CD14-positive monocyte (primary cell): ENCODE measurements at regions of chr19 and their contacts with region 1.

Region 1: DNA sequence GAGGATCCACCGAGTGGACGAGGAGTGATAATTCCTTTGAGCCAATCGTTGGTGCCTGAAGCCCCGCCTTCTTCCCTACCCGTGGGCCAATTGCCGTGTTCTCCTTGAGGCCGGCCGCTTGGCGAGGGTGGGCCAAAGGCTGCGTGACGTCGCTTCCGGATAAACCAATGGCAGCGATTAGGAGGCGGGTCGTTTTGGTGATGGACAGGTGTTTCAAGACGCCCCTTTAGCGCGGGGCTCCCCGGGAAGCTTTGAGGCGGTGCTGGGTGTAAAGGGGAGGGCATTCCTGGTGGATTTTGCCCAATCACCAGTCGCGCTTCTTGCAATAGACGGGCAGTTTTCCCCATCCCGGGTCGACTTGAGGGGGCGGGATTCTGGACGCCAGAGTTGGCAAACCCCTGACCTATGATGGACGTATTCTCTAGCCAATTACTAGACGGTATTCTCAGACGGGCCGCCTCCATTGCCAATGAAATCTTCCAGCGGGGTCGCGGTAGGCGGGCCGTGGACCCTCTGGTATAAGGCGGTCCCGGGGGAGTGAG is 310 bp upstream of the PRMT1 start:
- DNase-seq: peak; percentile 99 to 100 (median 100)
- H3K4me3 ChIP-seq: peak overlapping the region; percentile 92 to 98 (median 93)
- H3K4me3 Mint-ChIP-seq: peak overlapping the region; percentile 96
- H3K27ac ChIP-seq: peak overlapping the region; percentile 91 to 98
- H3K27ac Mint-ChIP-seq: peak overlapping the region; percentile 98 to 100 (median 100)
- H3K4me1 ChIP-seq: peaks cover 29 to 38% of the 10 kb centered on the region in 2 donors
- H3K4me1 Mint-ChIP-seq: peaks cover 25% of the 10 kb centered on the region
- H3K27me3 ChIP-seq: no peaks in the 10 kb centered on the region
- H3K27me3 Mint-ChIP-seq: peaks cover 0 to 5% (median 0%) of the 10 kb centered on the region in 3 donors
- CTCF ChIP-seq: no peak

Region 2: DNA sequence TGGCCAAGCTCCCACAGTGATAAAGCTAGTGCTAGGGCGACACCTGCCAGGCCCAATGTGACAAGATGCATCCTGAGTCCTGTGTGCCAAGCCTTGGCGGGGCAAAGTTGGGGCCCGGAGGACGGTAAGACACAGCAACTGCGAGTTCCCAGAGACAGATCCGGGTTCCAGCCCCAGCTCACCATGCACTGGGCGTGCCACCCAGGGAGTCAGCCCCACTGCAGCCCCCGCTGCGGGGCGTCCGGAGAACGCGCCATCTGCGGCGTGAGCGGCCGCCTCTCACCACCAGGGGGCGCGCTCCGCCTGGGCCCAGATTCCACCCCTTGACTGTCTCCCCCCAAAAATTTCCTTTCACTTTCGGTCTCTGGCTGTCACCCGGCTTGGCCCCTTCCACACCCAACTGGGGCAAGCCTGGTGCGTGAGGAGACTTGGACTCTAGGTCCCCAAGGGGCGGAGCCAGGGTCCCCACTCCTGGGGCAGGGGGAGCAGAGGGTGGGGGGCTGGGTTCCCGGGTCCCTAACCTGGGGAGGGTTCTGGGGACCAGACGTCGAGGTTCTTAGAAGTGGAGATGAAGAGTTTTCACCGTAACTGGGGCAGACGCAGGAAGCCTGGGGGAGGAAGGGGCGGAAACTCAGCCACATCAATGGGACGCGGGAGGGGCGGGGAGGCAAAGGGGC is 202.8 kb before region 1 on chr19 and contains the start of gene FLT3LG:
- intact Hi-C with region 1: loop called in 1 of 2 experiments (anchors 5 kb)
- DNase-seq: peak; percentile 82 to 86 (median 85)
- H3K4me3 ChIP-seq: peak within 1 kb of the TSS; percentile 62 to 90 (median 69)
- H3K4me3 Mint-ChIP-seq: peak within 1 kb of the TSS; percentile 86 to 91
- H3K27ac ChIP-seq: peak within 1 kb of the TSS; percentile 53 to 83
- H3K27ac Mint-ChIP-seq: peak within 1 kb of the TSS; percentile 33 to 92 (median 88)
- H3K4me1 ChIP-seq: peaks cover 32 to 41% of the 10 kb centered on the region in 2 donors
- H3K4me1 Mint-ChIP-seq: peaks cover 45% of the 10 kb centered on the region
- H3K27me3 ChIP-seq: no peaks in the 10 kb centered on the region
- H3K27me3 Mint-ChIP-seq: peaks cover 2 to 13% (median 6%) of the 10 kb centered on the region in 3 donors
- CTCF ChIP-seq: peak; percentile 93
- polyA plus RNA-seq, gene FLT3LG: 5.0 to 13.8 (median 6.9) TPM

Region 3: GRCh38 chr19:49497047-49497788 is 179.5 kb before region 1 on chr19:
- intact Hi-C with region 1: loop called (anchors 5 to 10 kb)
- DNase-seq: peak; percentile 89 to 93 (median 91)
- H3K4me3 ChIP-seq: peak overlapping the region; percentile 84 to 98 (median 86)
- H3K4me3 Mint-ChIP-seq: peak overlapping the region; percentile 91 to 94
- H3K27ac ChIP-seq: peak overlapping the region; percentile 92 to 95
- H3K27ac Mint-ChIP-seq: peak overlapping the region; percentile 95 to 99 (median 97)
- H3K4me1 ChIP-seq: peaks cover 47 to 52% of the 10 kb centered on the region in 2 donors
- H3K4me1 Mint-ChIP-seq: peaks cover 40% of the 10 kb centered on the region
- H3K27me3 ChIP-seq: no peaks in the 10 kb centered on the region
- H3K27me3 Mint-ChIP-seq: peaks cover 9 to 18% (median 12%) of the 10 kb centered on the region in 3 donors
- CTCF ChIP-seq: no peak

Region 4: GRCh38 chr19:49590071-49590970 is 86.4 kb before region 1 on chr19:
- intact Hi-C with region 1: loop called (anchors 5 kb)
- DNase-seq: peak; percentile 85 to 91 (median 88)
- H3K4me3 ChIP-seq: peak overlapping the region; percentile 64 to 98 (median 95)
- H3K4me3 Mint-ChIP-seq: peak overlapping the region; percentile 86 to 92
- H3K27ac ChIP-seq: peak overlapping the region; percentile 93 to 94
- H3K27ac Mint-ChIP-seq: peak overlapping the region; percentile 88 to 94 (median 92)
- H3K4me1 ChIP-seq: peaks cover 28 to 37% of the 10 kb centered on the region in 2 donors
- H3K4me1 Mint-ChIP-seq: peaks cover 30% of the 10 kb centered on the region
- H3K27me3 ChIP-seq: no peaks in the 10 kb centered on the region
- H3K27me3 Mint-ChIP-seq: peaks cover 3 to 10% (median 5%) of the 10 kb centered on the region in 3 donors
- CTCF ChIP-seq: no peak